ENCODE measurements at regions of chr14 and their contacts with region 1.

Region 1: GRCh38 chr14:105490572-105491366 is at the start of gene TEDC1:
- DNase-seq: peak; percentile 100
- ATAC-seq: peak; percentile 69
- H3K4me3 ChIP-seq: peak within 1 kb of the TSS in 4 of 5 experiments; percentile 65 to 89 (median 79)
- H3K4me3 Mint-ChIP-seq: peak within 1 kb of the TSS; percentile 90
- H3K27ac ChIP-seq: peak within 1 kb of the TSS; percentile 95 to 96
- H3K27ac Mint-ChIP-seq: peak within 1 kb of the TSS; percentile 97
- H3K4me1 ChIP-seq: peaks cover 33 to 49% of the 10 kb centered on the region in 2 donors
- H3K4me1 Mint-ChIP-seq: peaks cover 35% of the 10 kb centered on the region
- H3K27me3 ChIP-seq: no peaks in the 10 kb centered on the region
- H3K27me3 Mint-ChIP-seq: no peaks in the 10 kb centered on the region
- CTCF ChIP-seq: peak; percentile 82
- total RNA-seq, gene TEDC1: 22.2 and 25.9 TPM in 2 replicates

Region 2: GRCh38 chr14:105300792-105301533 is 189.8 kb before region 1 on chr14 and contains the start of gene BRF1:
- CTCF ChIA-PET with region 1: interaction called, 7 read pairs
- POLR2A ChIA-PET with region 1: interaction called, 4 read pairs
- intact Hi-C with region 1: loop called (anchors 1 kb)
- DNase-seq: peak; percentile 99
- ATAC-seq: peak; percentile 85
- H3K4me3 ChIP-seq: peak within 1 kb of the TSS; percentile 55 to 78 (median 67)
- H3K4me3 Mint-ChIP-seq: peak within 1 kb of the TSS; percentile 92
- H3K27ac ChIP-seq: peak within 1 kb of the TSS; percentile 82 to 85
- H3K27ac Mint-ChIP-seq: peak within 1 kb of the TSS; percentile 96
- H3K4me1 ChIP-seq: peaks cover 15 to 22% of the 10 kb centered on the region in 2 donors
- H3K4me1 Mint-ChIP-seq: peaks cover 20% of the 10 kb centered on the region
- H3K27me3 ChIP-seq: no peaks in the 10 kb centered on the region
- H3K27me3 Mint-ChIP-seq: no peaks in the 10 kb centered on the region
- CTCF ChIP-seq: no peak
- total RNA-seq, gene BRF1: 55.8 and 61.5 TPM in 2 replicates

Region 3: DNA sequence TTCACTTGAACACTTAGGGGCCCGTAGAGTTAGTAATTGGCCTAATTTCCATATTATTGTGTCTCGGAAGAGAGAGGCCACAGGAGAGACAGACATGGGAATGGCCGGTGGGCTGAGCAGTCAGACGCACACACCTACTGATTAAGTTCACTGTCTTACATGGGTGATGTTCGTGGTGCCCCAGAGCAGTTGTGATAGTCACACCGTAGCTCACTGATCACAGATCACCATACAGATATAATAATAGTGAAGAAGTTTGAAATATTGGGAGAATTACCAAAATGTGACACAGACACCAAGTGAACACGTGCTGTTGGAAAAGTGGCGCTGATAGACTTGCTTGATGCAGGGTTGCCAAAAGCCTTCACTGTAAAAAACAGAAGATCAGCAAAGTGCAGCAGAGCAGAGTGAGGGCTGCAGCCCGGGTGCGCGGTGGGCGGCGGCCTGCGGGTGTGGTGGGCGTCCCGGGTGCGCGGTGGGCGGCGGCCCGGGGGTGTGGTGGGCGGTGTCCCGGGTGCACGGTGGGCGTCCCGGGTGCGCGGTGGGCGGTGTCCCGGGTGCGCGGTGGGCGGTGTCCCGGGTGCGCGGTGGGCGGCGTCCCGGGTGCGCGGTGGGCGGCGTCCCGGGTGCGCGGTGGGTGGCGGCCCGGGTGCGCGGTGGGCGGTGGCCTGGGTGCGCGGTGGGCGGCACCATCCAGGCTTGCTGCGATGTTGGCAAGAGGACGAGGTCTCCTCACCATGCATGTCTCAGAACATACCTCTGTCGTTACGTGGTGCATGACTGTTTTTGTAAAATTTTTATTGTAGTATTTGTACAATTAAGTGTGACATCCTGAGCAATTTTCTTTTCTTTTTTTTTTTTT is 126.7 kb before region 1 on chr14:
- CTCF ChIA-PET with region 1: interaction called, 17 read pairs
- POLR2A ChIA-PET with region 1: no interaction called
- intact Hi-C with region 1: no loop called
- DNase-seq: peak; percentile 71
- ATAC-seq: peak; percentile 80
- H3K4me3 ChIP-seq: peak overlapping the region in 2 of 5 experiments; percentile 9 to 29
- H3K4me3 Mint-ChIP-seq: peak overlapping the region; percentile 82
- H3K27ac ChIP-seq: no peak overlapping the region
- H3K27ac Mint-ChIP-seq: no peak overlapping the region
- H3K4me1 ChIP-seq: peaks cover 7 to 9% of the 10 kb centered on the region in 2 donors
- H3K4me1 Mint-ChIP-seq: peaks cover 14% of the 10 kb centered on the region
- H3K27me3 ChIP-seq: no peaks in the 10 kb centered on the region
- H3K27me3 Mint-ChIP-seq: no peaks in the 10 kb centered on the region
- CTCF ChIP-seq: no peak

Region 4: GRCh38 chr14:105389976-105390848 is 100.6 kb before region 1 on chr14:
- CTCF ChIA-PET with region 1: interaction called, 11 read pairs
- POLR2A ChIA-PET with region 1: no interaction called
- intact Hi-C with region 1: no loop called
- DNase-seq: peak; percentile 52
- ATAC-seq: peak; percentile 61
- H3K4me3 ChIP-seq: no peak overlapping the region
- H3K4me3 Mint-ChIP-seq: no peak overlapping the region
- H3K27ac ChIP-seq: peak overlapping the region in 1 of 2 donors; percentile 40
- H3K27ac Mint-ChIP-seq: peak overlapping the region; percentile 20
- H3K4me1 ChIP-seq: peaks cover 10 to 17% of the 10 kb centered on the region in 2 donors
- H3K4me1 Mint-ChIP-seq: peaks cover 14% of the 10 kb centered on the region
- H3K27me3 ChIP-seq: no peaks in the 10 kb centered on the region
- H3K27me3 Mint-ChIP-seq: no peaks in the 10 kb centered on the region
- CTCF ChIP-seq: no peak

Region 5: GRCh38 chr14:105414456-105415371 is 76.1 kb before region 1 on chr14:
- CTCF ChIA-PET with region 1: interaction called, 8 read pairs
- POLR2A ChIA-PET with region 1: no interaction called
- intact Hi-C with region 1: loop called (anchors 2 kb)
- DNase-seq: peak; percentile 78
- ATAC-seq: peak; percentile 78
- H3K4me3 ChIP-seq: peak overlapping the region in 4 of 5 experiments; percentile 19 to 71 (median 53)
- H3K4me3 Mint-ChIP-seq: peak overlapping the region; percentile 83
- H3K27ac ChIP-seq: no peak overlapping the region
- H3K27ac Mint-ChIP-seq: no peak overlapping the region
- H3K4me1 ChIP-seq: peaks cover 28 to 31% of the 10 kb centered on the region in 2 donors
- H3K4me1 Mint-ChIP-seq: peaks cover 26% of the 10 kb centered on the region
- H3K27me3 ChIP-seq: peaks cover 0 to 36% (median 15%) of the 10 kb centered on the region in 4 experiments
- H3K27me3 Mint-ChIP-seq: peaks cover 11% of the 10 kb centered on the region
- CTCF ChIP-seq: peak; percentile 91

Region 6: GRCh38 chr14:105473677-105474482 is 16.9 kb before region 1 on chr14:
- CTCF ChIA-PET with region 1: interaction called, 121 read pairs
- POLR2A ChIA-PET with region 1: interaction called, 7 read pairs
- intact Hi-C with region 1: loop called (anchors 2 kb)
- DNase-seq: peak; percentile 75
- ATAC-seq: peak; percentile 50
- H3K4me3 ChIP-seq: peak overlapping the region in 4 of 5 experiments; percentile 32 to 64 (median 55)
- H3K4me3 Mint-ChIP-seq: peak overlapping the region; percentile 80
- H3K27ac ChIP-seq: peak overlapping the region in 1 of 2 donors; percentile 57
- H3K27ac Mint-ChIP-seq: peak overlapping the region; percentile 68
- H3K4me1 ChIP-seq: peaks cover 40 to 50% of the 10 kb centered on the region in 2 donors
- H3K4me1 Mint-ChIP-seq: peaks cover 35% of the 10 kb centered on the region
- H3K27me3 ChIP-seq: peaks cover 0 to 46% (median 11%) of the 10 kb centered on the region in 4 experiments
- H3K27me3 Mint-ChIP-seq: no peaks in the 10 kb centered on the region
- CTCF ChIP-seq: no peak